Mammary epithelial cell (primary cell): ENCODE measurements at regions of chr1 and their contacts with region 1.

Region 1: GRCh38 chr1:18681423-18681835 is 50.8 kb downstream of the PAX7 start:
- DNase-seq: peak; percentile 52
- H3K4me3 ChIP-seq: no peak overlapping the region
- H3K27ac ChIP-seq: no peak overlapping the region
- H3K4me1 ChIP-seq: no peaks in the 10 kb centered on the region
- H3K27me3 ChIP-seq: no peaks in the 10 kb centered on the region
- CTCF ChIP-seq: peak; percentile 85 to 91

Region 2: DNA sequence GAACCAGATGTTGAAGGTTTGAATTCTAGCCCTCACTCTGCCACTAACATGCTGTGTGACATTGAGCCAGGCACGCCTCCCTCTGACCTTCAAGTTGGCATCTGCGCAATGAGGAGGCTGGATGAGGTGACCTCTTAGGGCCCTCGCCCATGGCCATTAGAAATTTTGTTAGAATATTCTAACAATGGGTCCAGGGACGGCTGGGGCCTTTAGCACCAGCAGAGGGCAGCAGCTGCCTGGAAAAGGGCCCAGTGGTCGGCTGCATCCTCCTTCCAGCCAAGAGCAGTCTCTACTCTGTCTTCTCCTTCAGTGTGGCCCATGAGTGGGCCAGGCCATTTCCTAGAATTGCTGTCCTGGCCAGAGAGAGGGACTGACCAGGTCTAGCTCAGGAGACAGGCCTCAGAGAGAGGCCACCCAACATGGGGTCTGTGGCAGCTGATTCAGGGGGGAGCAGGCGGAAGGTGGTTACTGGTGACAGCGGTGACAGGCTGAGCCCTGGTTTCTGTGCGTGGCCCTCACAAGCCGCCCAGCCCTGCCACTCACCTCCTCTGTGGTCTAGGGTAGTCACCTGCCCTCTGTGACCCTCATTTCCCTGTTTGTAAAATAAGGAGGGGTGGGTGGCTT is 1027.6 kb before region 1 on chr1:
- CTCF ChIA-PET with region 1: no interaction called
- dilution Hi-C with region 1: no loop called
- in situ Hi-C with region 1: no loop called
- intact Hi-C with region 1: loop called (anchors 5 kb)
- DNase-seq: no peak
- H3K4me3 ChIP-seq: no peak overlapping the region
- H3K27ac ChIP-seq: no peak overlapping the region
- H3K4me1 ChIP-seq: no peaks in the 10 kb centered on the region
- H3K27me3 ChIP-seq: no peaks in the 10 kb centered on the region
- CTCF ChIP-seq: peak; percentile 70 to 80

Region 3: DNA sequence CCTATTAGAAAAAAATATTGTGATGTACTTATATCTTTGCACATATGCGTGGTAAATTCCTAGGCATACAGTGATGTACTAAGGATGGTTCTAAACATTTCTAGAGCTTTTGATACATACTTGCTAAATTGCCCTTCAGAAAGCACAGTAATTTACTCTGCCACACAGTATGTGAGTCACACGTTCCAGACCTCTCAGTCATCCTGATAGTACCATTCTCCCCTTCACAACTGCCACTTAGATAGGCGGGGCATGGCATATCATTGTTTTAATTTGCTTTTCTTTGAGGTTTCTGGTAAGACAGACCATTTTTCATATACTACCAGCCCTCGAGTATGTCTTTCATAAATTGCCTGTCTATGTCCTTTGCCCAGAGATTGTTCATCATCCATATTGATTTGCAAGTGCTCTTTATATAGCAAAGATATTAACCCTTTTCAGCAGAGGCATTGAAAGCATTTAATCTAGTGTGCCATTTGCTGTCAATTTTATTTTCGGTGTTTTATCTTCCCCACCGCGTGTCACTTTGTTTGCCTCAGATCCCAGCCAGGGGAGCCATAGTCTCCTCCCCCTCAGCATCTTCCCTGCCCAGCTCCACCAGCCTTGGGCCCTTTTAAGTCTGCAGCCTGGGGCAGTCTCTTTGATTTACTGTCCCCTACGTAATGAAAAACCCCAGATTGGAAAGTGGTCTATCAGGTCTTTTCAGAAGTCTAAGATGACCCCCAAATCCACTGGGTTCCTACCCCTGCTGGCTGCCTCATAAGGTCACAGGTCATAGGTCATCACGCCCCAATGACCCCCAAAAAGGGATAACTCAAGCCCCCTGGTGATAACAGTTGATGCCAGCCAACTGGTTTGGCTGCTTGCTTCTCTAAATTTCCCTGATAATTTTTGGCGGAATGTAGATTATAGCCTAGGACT is 62.6 kb before region 1 on chr1:
- CTCF ChIA-PET with region 1: interaction called, 27 read pairs
- dilution Hi-C with region 1: no loop called
- in situ Hi-C with region 1: no loop called
- intact Hi-C with region 1: no loop called
- DNase-seq: peak; percentile 67
- H3K4me3 ChIP-seq: no peak overlapping the region
- H3K27ac ChIP-seq: no peak overlapping the region
- H3K4me1 ChIP-seq: peaks cover 10% of the 10 kb centered on the region
- H3K27me3 ChIP-seq: peaks cover 2% of the 10 kb centered on the region
- CTCF ChIP-seq: no peak

Region 4: DNA sequence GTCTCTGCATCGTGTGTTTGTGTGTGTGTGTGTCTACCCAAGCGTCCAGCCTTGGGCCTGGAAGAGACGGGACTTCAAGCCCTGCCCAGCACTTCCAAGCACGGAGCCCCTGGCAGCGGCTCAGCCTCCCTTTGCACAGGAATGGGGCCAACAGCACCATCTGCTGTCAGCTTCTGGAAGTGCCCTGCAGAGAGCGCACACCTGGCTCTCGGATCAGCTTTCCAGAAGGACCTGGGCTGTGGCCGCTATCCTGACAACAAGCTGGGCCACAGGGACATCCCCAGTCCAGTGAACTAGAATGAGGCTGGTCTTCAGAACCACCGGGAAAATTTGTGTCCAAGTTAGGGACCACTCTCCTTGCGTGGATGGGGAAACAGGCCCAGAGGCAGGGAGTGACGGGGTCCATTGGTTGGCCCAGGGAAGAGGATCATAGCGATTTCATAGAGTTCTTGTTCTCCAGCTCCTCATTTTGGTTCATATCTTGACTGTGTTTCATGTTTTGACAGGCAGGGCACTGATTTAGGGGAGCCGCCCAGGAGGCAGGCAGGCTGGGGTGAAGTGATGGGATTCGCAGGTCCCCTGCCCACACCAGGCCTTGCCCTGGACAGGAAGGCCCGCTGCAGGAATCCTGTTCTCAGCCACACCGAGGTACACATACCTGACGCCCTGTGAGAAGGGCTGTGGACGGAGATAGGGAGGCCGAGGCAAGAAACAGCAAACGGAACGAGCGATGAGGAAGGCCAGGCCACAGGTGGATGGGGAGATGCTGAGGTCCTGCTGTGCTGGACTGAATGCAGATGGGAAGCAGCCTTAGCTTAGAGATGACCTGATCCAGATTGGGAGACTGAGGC is 139.6 kb after region 1 on chr1:
- CTCF ChIA-PET with region 1: no interaction called
- dilution Hi-C with region 1: no loop called
- in situ Hi-C with region 1: no loop called
- intact Hi-C with region 1: loop called (anchors 2 kb)
- DNase-seq: peak; percentile 38
- H3K4me3 ChIP-seq: no peak overlapping the region
- H3K27ac ChIP-seq: no peak overlapping the region
- H3K4me1 ChIP-seq: no peaks in the 10 kb centered on the region
- H3K27me3 ChIP-seq: peaks cover 4% of the 10 kb centered on the region
- CTCF ChIP-seq: peak; percentile 94 to 97

Region 5: DNA sequence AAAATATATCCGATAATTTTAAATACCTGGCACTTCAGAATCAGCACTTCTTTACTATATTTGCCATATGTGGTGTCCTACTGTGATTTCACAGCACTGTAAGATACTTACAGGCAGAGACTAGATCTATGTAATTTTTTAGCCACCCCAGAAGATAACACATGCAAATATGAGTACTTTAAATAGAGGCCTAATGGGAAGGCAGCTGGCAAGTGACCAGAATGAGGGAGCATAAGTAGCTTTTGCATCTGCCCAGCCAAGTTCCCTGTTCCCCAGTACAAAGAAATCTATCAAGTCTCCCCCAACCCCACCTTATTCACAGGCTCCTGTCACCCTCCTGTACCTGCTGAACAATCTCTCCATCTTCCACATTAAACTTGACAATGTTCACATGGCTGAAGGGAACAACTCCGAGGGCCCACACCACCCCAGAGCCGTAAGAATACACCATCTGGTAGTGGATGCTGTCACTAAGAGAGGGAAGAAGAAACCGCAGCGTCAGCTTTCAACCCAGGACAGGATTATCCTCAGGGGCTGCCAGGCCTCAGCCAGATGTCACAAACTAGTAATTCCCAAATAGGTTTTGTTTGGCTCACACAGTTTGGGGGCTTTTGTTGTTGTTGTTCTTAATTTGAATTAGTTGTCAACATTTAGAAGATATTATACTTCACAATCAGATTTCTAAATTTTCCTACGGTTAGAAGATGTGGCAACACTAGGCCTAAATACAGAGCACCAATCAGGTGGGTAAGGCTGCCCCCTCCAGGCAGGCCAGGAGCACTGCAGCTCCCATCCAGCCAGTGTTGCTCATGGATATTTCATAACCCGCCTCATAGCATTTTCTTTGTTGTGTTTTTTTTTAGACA is 559.5 kb after region 1 on chr1:
- CTCF ChIA-PET with region 1: no interaction called
- dilution Hi-C with region 1: no loop called
- in situ Hi-C with region 1: no loop called
- intact Hi-C with region 1: loop called (anchors 5 kb)
- DNase-seq: peak; percentile 58
- H3K4me3 ChIP-seq: no peak overlapping the region
- H3K27ac ChIP-seq: no peak overlapping the region
- H3K4me1 ChIP-seq: no peaks in the 10 kb centered on the region
- H3K27me3 ChIP-seq: no peaks in the 10 kb centered on the region
- CTCF ChIP-seq: peak; percentile 91 to 99